ENCODE measurements at regions of chr13 and their contacts with region 1.

Region 1: GRCh38 chr13:111505175-111505777 is 184.8 kb downstream of the TEX29 start:
- DNase-seq: peak; percentile 79
- ATAC-seq: peak; percentile 99
- H3K4me3 Mint-ChIP-seq: no peak overlapping the region
- H3K27ac Mint-ChIP-seq: no peak overlapping the region
- H3K4me1 Mint-ChIP-seq: 0 out of 2 replicates have a peak, but pooled peaks cover 7% of the 10 kb centered on the region
- H3K27me3 Mint-ChIP-seq: peaks cover 14% of the 10 kb centered on the region
- CTCF ChIP-seq: 0 out of 2 replicates have a peak, but pooled peaks have one; percentile 26

Region 2: GRCh38 chr13:111491021-111491420 is 14.3 kb before region 1 on chr13:
- CTCF ChIA-PET with region 1: interaction called, 20 read pairs
- POLR2A ChIA-PET with region 1: interaction called, 3 read pairs
- DNase-seq: no peak
- ATAC-seq: peak; percentile 34
- H3K4me3 Mint-ChIP-seq: no peak overlapping the region
- H3K27ac Mint-ChIP-seq: no peak overlapping the region
- H3K4me1 Mint-ChIP-seq: no peaks in the 10 kb centered on the region
- H3K27me3 Mint-ChIP-seq: no peaks in the 10 kb centered on the region
- CTCF ChIP-seq: no peak

Region 3: DNA sequence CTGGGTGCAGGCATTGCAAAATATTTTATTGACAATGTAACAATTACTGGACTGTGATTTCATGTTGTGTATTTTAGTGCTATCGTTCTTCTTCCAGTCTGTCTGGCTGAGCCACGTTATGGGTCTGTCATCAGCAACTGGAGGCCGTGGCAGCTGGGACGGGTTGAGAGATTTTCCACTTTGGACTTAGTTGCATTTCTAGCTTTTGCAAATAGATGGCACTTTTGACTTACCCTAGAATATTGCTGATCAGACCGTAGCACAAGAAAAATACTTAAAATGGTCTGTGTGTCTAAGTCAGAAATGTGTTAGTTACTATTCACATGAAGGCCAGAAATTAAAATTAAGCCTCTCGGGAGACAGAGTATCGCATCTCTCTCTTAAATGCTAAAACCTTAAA is 26.2 kb after region 1 on chr13:
- CTCF ChIA-PET with region 1: interaction called, 16 read pairs
- POLR2A ChIA-PET with region 1: interaction called, 3 read pairs
- DNase-seq: no peak
- ATAC-seq: no peak
- H3K4me3 Mint-ChIP-seq: peak overlapping the region; percentile 48; the same call in 1 of the 2 replicates
- H3K27ac Mint-ChIP-seq: no peak overlapping the region
- H3K4me1 Mint-ChIP-seq: peaks cover 72% of the 10 kb centered on the region
- H3K27me3 Mint-ChIP-seq: peaks cover 69% of the 10 kb centered on the region
- CTCF ChIP-seq: no peak

Region 4: DNA sequence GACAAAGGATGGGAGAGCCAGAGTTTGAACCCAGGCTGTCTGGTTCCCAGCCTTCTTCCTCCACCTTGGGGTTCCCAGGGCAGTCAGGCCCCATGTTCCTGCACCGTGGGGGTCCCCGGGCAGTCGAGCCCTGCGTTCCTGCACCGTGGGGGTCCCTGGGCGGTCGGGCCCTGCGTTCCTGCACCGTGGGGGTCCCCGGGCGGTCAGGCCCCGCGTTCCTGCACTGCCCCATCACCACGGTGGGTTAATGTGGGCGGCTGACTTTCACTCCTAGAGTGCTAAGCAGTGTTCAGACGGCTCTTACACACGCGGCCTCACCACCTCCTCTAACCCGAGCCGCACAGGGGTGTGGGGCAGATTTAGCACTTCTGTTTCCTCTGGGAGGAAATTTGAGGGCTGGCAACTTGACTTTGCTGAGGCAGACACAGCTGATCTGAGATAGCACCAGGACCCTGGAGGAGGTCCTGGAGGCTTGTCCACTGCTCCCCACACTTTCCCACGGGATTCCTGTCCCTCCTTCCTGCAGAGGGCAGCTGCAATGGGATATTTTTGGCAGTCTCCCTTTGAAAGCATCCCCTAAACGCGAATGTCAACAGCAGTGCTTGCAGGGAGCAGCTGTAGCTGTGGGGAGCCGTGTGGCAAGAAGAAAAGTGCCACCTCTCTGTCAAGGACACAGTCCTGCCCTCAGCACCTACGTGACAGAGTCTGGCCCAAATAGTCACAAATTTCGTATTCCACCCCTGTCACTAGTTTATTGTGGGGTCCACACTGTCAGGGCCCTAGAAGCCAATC is 54.5 kb after region 1 on chr13:
- CTCF ChIA-PET with region 1: no interaction called
- POLR2A ChIA-PET with region 1: no interaction called
- DNase-seq: no peak
- ATAC-seq: no peak
- H3K4me3 Mint-ChIP-seq: no peak overlapping the region
- H3K27ac Mint-ChIP-seq: no peak overlapping the region
- H3K4me1 Mint-ChIP-seq: peaks cover 2% of the 10 kb centered on the region; the same call in 1 of the 2 replicates
- H3K27me3 Mint-ChIP-seq: no peaks in the 10 kb centered on the region; the same call in none of the 2 replicates
- CTCF ChIP-seq: no peak

Region 5: GRCh38 chr13:111577208-111577828 is 72.0 kb after region 1 on chr13:
- CTCF ChIA-PET with region 1: no interaction called
- POLR2A ChIA-PET with region 1: no interaction called
- DNase-seq: no peak
- ATAC-seq: no peak
- H3K4me3 Mint-ChIP-seq: no peak overlapping the region
- H3K27ac Mint-ChIP-seq: no peak overlapping the region
- H3K4me1 Mint-ChIP-seq: no peaks in the 10 kb centered on the region
- H3K27me3 Mint-ChIP-seq: peaks cover 21% of the 10 kb centered on the region
- CTCF ChIP-seq: no peak

Region 6: GRCh38 chr13:111630406-111630805 is 125.1 kb after region 1 on chr13:
- CTCF ChIA-PET with region 1: interaction called, 16 read pairs
- POLR2A ChIA-PET with region 1: no interaction called
- DNase-seq: peak; percentile 52
- ATAC-seq: peak; percentile 38
- H3K4me3 Mint-ChIP-seq: no peak overlapping the region
- H3K27ac Mint-ChIP-seq: no peak overlapping the region
- H3K4me1 Mint-ChIP-seq: peaks cover 40% of the 10 kb centered on the region
- H3K27me3 Mint-ChIP-seq: peaks cover 2% of the 10 kb centered on the region; the same call in 1 of the 2 replicates
- CTCF ChIP-seq: no peak

Measured in WTC11 (cell line).